ENCODE measurements at regions of chr11 and their contacts with region 1.

Region 1: DNA sequence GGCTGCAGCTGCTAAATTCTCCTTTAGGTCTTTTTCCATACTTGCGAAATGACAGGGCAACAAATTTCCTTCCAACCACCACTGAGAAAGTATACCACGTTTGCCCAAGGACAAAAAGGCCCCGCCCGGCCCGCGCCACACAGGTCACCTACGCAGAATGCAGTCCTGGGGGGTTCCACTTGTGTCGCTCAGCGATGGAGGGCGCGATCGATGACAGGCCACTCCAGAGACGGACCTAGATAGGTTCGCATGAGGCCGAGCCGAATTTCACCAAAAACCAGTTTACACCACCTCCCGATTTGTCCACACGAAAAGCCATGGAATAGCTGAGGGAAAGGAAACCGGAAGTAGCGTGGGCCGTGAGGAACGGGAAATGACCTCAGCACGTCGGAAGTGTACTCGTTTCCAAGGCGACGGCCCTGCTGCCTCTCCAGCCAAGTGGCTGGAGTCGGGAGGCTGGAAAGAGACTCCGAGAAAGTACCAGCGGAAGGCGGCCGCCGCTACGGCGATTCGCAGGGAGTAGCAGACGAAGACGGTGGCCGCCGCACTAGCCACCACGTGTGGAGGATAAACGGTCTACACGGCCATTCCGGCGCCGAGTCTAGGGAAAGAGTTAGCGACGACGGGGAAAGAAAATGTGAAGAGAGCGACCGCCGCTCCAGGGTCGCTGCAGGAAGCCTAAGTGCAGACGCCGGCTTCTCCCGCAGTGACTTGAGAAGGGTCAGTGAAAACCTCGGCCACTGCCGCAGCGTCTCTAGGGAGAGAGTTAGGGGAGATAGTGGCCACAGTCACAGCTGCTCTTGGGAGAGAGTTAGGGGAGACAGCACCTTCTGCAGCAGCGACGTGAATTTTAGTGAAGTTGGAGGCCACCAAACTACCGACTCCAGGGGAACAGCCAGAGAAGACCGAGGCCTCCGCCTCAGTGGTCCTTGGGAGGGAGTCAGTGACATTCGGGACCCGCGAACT is at the start of gene ANKRD42:
- DNase-seq: peak; percentile 96
- H3K4me3 ChIP-seq: peak within 1 kb of the TSS; percentile 31 to 87 (median 83)
- H3K27ac ChIP-seq: peak within 1 kb of the TSS; percentile 72
- H3K4me1 ChIP-seq: peaks cover 17% of the 10 kb centered on the region
- H3K27me3 ChIP-seq: no peaks in the 10 kb centered on the region
- CTCF ChIP-seq: no peak
- POLR2A ChIP-seq: peak; percentile 92
- total RNA-seq, gene ANKRD42: 6.6 and 7.6 TPM in 2 replicates

Region 2: DNA sequence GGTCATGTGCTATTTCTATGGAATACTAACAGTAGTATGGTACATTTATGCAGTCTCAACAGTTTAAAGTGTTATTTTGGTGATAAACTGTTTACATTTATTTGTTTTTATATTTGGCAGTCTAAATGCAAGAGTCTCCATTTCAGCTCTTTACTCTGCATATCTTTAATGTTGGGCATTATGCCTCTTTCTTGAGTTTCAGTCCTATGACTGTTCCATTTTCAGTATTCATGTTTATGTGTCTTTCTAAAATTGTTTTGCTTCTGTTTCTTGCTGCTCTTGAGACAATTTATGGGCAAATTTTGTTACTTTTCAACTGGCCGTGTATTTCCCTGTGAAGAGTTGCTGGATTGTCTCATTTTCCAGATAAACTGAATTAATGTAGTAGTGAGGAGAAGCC is 115.3 kb before region 1 on chr11:
- CTCF ChIA-PET with region 1: no interaction called
- POLR2A ChIA-PET with region 1: no interaction called
- dilution Hi-C with region 1: no loop called
- intact Hi-C with region 1: no loop called
- DNase-seq: no peak
- H3K4me3 ChIP-seq: no peak overlapping the region
- H3K27ac ChIP-seq: no peak overlapping the region
- H3K4me1 ChIP-seq: peaks cover 5% of the 10 kb centered on the region
- H3K27me3 ChIP-seq: no peaks in the 10 kb centered on the region
- CTCF ChIP-seq: no peak
- POLR2A ChIP-seq: no peak

Region 3: GRCh38 chr11:83170865-83171264 is 22.7 kb before region 1 on chr11:
- CTCF ChIA-PET with region 1: interaction called, 3 read pairs
- POLR2A ChIA-PET with region 1: no interaction called
- dilution Hi-C with region 1: no loop called
- intact Hi-C with region 1: loop called (anchors 2 kb)
- DNase-seq: no peak
- H3K4me3 ChIP-seq: peak overlapping the region in 1 of 3 experiments; percentile 12
- H3K27ac ChIP-seq: no peak overlapping the region
- H3K4me1 ChIP-seq: peaks cover 25% of the 10 kb centered on the region
- H3K27me3 ChIP-seq: no peaks in the 10 kb centered on the region
- CTCF ChIP-seq: no peak
- POLR2A ChIP-seq: no peak

Region 4: GRCh38 chr11:83249972-83250593 is 56.5 kb after region 1 on chr11:
- CTCF ChIA-PET with region 1: interaction called, 9 read pairs
- POLR2A ChIA-PET with region 1: no interaction called
- dilution Hi-C with region 1: no loop called
- intact Hi-C with region 1: loop called (anchors 1 kb)
- DNase-seq: peak; percentile 46
- H3K4me3 ChIP-seq: no peak overlapping the region
- H3K27ac ChIP-seq: no peak overlapping the region
- H3K4me1 ChIP-seq: no peaks in the 10 kb centered on the region
- H3K27me3 ChIP-seq: no peaks in the 10 kb centered on the region
- CTCF ChIP-seq: peak; percentile 35 to 53
- POLR2A ChIP-seq: no peak

Region 5: DNA sequence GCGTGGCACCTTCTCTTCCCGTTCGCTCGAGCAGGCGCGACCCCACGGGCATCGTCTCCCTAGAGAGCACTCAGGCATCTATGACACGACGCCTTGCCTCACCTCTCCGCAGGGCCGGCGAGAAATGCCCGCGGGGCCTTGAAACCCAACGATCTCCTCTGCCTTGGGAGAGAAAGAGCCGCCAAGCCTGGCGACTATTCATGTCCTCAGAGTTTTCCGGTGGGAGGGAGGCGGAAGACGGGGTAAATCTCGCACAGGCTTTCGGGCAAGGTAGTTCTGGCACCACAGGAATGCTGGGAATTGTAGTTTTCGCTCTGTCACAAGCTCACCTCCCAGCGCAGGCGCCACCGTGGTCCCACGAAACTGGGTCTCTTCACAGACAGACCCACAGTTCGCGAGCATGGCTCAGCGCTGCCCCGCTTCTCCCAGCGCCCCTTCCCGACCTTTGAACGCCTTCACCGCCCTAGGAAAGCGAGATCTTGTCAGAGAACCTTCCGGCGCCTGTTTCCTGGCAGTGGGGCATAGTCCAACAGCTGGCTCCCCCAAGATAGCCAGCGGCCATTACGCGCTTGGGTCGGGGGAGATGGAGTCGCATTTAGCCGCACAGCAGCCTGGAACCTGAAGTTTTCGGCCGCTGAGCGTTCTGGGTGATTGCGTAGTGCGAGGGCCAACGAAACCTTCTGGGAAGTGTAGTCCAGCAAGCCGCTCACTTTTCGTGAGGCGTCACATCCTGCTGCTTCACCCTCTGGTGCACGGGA is 92.4 kb after region 1 on chr11 and contains the start of gene CCDC90B:
- CTCF ChIA-PET with region 1: no interaction called
- POLR2A ChIA-PET with region 1: no interaction called
- dilution Hi-C with region 1: no loop called
- intact Hi-C with region 1: loop called (anchors 2 kb)
- DNase-seq: peak; percentile 98
- H3K4me3 ChIP-seq: peak within 1 kb of the TSS; percentile 47 to 100 (median 85)
- H3K27ac ChIP-seq: peak within 1 kb of the TSS; percentile 86
- H3K4me1 ChIP-seq: peaks cover 9% of the 10 kb centered on the region
- H3K27me3 ChIP-seq: peaks cover 0 to under 1% of the 10 kb centered on the region in 2 experiments
- CTCF ChIP-seq: peak; percentile 17 to 24
- POLR2A ChIP-seq: peak; percentile 92
- total RNA-seq, gene CCDC90B: 45.8 and 49.6 TPM in 2 replicates

Region 6: DNA sequence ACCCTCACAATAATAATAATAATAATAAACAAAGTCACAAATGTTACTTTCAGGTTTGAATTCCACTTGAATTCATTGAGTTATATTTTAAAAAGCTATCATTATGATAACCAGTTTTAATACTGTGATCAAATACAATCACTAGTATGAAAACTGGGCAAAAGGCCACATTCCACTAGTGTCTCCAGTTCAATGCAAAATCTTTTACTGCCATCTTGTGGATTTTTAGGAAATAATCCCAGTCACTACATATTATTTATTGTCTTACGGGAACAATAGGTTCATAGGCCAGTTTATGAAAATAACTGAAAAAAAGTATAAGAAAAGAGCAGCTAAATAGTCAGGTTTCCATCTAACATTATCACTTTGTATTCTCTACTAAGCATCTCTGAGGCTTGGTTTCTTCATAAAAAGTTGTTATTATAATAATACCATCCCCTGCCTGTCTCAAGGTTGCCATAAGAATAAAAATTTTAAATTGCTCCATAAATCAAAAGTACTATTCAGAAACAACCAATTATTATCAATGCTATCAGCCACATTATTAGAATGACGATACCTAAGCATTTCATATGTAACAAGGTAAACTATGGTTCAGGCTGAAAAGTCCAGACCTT is 626.4 kb after region 1 on chr11:
- CTCF ChIA-PET with region 1: no interaction called
- POLR2A ChIA-PET with region 1: no interaction called
- dilution Hi-C with region 1: no loop called
- intact Hi-C with region 1: loop called (anchors 5 kb)
- DNase-seq: peak; percentile 65
- H3K4me3 ChIP-seq: no peak overlapping the region
- H3K27ac ChIP-seq: no peak overlapping the region
- H3K4me1 ChIP-seq: no peaks in the 10 kb centered on the region
- H3K27me3 ChIP-seq: peaks cover 0 to 2% of the 10 kb centered on the region in 2 experiments
- CTCF ChIP-seq: peak; percentile 18 to 23
- POLR2A ChIP-seq: no peak